CD4-positive, alpha-beta memory T cell (primary cell): ENCODE measurements at regions of chr2 and their contacts with region 1.

Region 1: DNA sequence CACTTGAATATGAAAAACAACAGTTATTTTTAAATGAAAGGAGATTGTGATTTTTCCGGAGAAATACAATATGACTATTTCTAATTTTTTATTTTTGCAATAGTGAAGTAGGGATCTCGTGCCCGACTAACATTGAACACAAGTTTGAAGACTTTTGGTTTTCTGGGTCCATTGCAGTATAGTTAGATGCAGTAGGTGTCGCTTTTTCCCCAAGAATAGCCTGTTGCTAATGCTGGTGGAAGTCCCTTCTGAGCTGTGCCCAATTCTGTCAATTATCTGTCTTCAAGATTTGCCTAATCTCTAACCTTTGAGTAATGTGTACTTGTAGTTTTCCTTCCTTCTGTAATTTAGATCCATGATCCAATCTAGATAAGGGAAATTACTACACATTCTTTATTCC is 36.5 kb downstream of the SEMA4F start:
- DNase-seq: peak in 4 of 5 donors; percentile 23 to 42 (median 25)
- H3K4me3 ChIP-seq: no peak overlapping the region
- H3K4me3 Mint-ChIP-seq: no peak overlapping the region
- H3K27ac ChIP-seq: no peak overlapping the region
- H3K27ac Mint-ChIP-seq: no peak overlapping the region
- H3K4me1 ChIP-seq: no peaks in the 10 kb centered on the region
- H3K4me1 Mint-ChIP-seq: no peaks in the 10 kb centered on the region
- H3K27me3 ChIP-seq: no peaks in the 10 kb centered on the region
- H3K27me3 Mint-ChIP-seq: peaks cover 0 to 2% of the 10 kb centered on the region in 2 donors

Region 2: GRCh38 chr2:74587664-74588277 is 102.8 kb before region 1 on chr2:
- CTCF ChIA-PET with region 1: no interaction called
- POLR2A ChIA-PET with region 1: no interaction called
- intact Hi-C with region 1: no loop called
- DNase-seq: peak; percentile 58 to 68 (median 67)
- H3K4me3 ChIP-seq: no peak overlapping the region
- H3K4me3 Mint-ChIP-seq: no peak overlapping the region
- H3K27ac ChIP-seq: no peak overlapping the region
- H3K27ac Mint-ChIP-seq: no peak overlapping the region
- H3K4me1 ChIP-seq: peaks cover 8% of the 10 kb centered on the region
- H3K4me1 Mint-ChIP-seq: peaks cover 7 to 10% (median 9%) of the 10 kb centered on the region in 4 donors
- H3K27me3 ChIP-seq: peaks cover 13% of the 10 kb centered on the region
- H3K27me3 Mint-ChIP-seq: peaks cover 1 to 8% of the 10 kb centered on the region in 2 donors

Region 3: DNA sequence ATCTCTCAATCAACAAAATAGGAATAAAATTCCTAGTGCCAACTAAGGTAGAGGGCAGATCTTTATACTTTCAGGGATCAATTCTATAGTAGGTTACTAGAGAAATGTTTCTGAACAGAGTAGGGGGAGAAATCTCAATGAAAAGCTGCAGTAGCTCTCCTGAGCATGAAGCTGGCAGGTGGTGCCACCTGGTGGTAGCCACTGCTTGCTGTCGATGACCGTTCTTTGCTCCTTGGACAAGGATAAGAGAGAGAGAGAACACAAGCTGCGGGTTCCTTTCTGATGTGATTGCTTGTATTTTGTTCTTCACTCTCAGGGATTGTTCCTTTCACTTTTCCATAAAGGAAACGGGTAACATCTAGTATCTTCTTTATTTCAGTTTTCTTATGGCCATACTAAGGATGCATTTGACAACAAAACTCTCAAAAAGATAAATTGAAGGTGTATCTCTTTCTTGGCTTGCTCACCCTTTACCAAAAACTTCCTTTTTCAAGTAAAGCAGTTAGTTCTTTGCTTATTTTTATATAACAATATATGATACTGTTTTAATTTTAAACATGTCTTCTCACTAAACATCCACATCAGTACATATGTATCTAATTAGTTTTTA is 937.4 kb after region 1 on chr2:
- CTCF ChIA-PET with region 1: no interaction called
- POLR2A ChIA-PET with region 1: no interaction called
- intact Hi-C with region 1: loop called (anchors 5 kb)
- DNase-seq: peak; percentile 24 to 50 (median 29)
- H3K4me3 ChIP-seq: no peak overlapping the region
- H3K4me3 Mint-ChIP-seq: no peak overlapping the region
- H3K27ac ChIP-seq: no peak overlapping the region
- H3K27ac Mint-ChIP-seq: no peak overlapping the region
- H3K4me1 ChIP-seq: no peaks in the 10 kb centered on the region
- H3K4me1 Mint-ChIP-seq: peaks cover 0 to 4% (median 0%) of the 10 kb centered on the region in 4 donors
- H3K27me3 ChIP-seq: no peaks in the 10 kb centered on the region
- H3K27me3 Mint-ChIP-seq: peaks cover 16 to 28% of the 10 kb centered on the region in 2 donors